Aorta (tissue), 5 donors: ENCODE measurements at regions of chr17 and their contacts with region 1.

Region 1: GRCh38 chr17:28710861-28711722 is 596 bp downstream of the PROCA1 start:
- DNase-seq: peak; percentile 93 to 96
- ATAC-seq: peak; percentile 96
- H3K4me3 ChIP-seq: peak overlapping the region; percentile 1 to 12
- H3K27ac ChIP-seq: peak overlapping the region in 1 of 2 donors; percentile 75
- H3K4me1 ChIP-seq: no peaks in the 10 kb centered on the region
- H3K27me3 ChIP-seq: no peaks in the 10 kb centered on the region

Region 2: GRCh38 chr17:28612936-28613872 is 97.9 kb before region 1 on chr17:
- intact Hi-C with region 1: no loop called
- DNase-seq: no peak
- ATAC-seq: peak; percentile 71
- H3K4me3 ChIP-seq: no peak overlapping the region
- H3K27ac ChIP-seq: no peak overlapping the region
- H3K4me1 ChIP-seq: no peaks in the 10 kb centered on the region
- H3K27me3 ChIP-seq: no peaks in the 10 kb centered on the region

Region 3: DNA sequence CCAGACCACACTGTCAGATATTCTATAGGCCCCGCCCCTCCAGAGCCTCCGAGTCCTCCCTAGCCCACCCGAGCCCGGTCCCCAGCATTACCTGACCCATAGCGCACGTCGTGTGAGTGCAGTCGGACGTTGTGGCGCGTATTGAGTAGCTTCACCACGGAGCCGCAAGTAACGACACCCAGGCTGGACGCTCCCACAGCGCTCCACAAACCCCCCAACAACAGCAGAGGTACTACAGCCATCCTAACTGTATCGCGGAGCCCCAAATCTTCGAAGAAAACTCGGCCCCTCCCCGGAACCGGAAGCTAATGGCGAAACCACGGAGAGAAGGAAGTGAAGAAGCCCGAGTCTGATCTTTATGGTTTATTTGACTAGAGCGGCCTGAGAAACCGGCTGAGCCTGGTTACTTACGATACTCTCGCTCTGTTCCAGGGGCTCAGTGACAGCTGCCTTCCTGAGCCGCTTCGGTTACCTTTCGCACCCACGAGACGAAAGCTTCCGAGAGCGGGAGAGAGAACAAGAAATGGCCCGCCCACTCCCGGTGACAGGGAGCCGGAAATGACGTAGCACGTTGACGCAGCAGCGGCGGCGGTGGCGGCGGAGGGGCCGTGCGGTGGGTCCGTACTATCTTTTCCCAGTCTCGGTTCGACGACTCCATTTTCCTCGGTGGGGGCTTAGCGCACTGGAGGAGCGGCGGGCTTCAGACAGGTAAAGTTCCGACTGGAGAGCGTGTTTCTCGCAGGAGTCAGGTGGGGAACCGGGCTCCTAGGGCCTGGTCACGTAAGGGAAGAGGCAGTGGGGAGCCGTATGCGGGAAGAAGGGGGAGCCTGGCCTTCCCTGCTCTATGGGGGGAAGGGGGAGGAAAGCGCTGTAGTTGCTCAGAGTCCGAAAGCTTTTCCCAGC is 49.2 kb before region 1 on chr17 and contains the starts of genes SDF2 and SUPT6H:
- intact Hi-C with region 1: loop called in 1 of 2 experiments (anchors 5 kb)
- DNase-seq: peak; percentile 93 to 98
- ATAC-seq: peak; percentile 98
- H3K4me3 ChIP-seq: peak within 1 kb of the TSS; percentile 65 to 94
- H3K27ac ChIP-seq: peak within 1 kb of the TSS; percentile 23 to 97
- H3K4me1 ChIP-seq: peaks cover 0 to 3% of the 10 kb centered on the region in 2 donors
- H3K27me3 ChIP-seq: no peaks in the 10 kb centered on the region
- total RNA-seq, gene SDF2: 34.8 to 40.8 TPM
- total RNA-seq, gene SUPT6H: 73.1 to 81.2 TPM